Sigmoid colon (tissue), 7 donors: ENCODE measurements at regions of chr9 and their contacts with region 1.

Region 1: DNA sequence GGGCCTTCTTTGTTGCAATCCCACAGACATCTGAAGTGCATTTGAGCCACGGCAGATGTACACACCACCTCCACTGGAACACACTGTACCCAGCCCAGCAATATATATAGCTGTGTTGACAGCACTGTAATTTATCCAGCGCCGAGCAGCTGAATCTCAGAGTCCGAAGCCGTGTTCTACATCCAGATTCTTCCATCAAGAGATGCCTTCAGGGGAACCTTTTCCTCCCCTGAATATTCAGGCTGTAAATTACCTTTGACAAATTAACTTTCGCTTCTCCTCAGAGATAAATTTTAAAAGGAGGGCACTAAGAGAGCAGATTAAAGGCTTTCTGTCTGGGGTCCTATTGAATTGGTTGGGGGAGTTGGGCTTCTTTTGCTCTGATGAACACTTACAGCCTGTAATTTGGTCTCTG is 76.4 kb downstream of the ROR2 start:
- DNase-seq: peak; percentile 91
- H3K4me3 ChIP-seq: no peak overlapping the region
- H3K27ac ChIP-seq: peak overlapping the region; percentile 82 to 90 (median 86)
- H3K4me1 ChIP-seq: peaks cover 0 to 84% (median 72%) of the 10 kb centered on the region in 4 donors
- H3K27me3 ChIP-seq: no peaks in the 10 kb centered on the region
- CTCF ChIP-seq: no peak
- EP300 ChIP-seq: peak; percentile 98 to 99 (median 99)
- POLR2A ChIP-seq: no peak

Region 2: DNA sequence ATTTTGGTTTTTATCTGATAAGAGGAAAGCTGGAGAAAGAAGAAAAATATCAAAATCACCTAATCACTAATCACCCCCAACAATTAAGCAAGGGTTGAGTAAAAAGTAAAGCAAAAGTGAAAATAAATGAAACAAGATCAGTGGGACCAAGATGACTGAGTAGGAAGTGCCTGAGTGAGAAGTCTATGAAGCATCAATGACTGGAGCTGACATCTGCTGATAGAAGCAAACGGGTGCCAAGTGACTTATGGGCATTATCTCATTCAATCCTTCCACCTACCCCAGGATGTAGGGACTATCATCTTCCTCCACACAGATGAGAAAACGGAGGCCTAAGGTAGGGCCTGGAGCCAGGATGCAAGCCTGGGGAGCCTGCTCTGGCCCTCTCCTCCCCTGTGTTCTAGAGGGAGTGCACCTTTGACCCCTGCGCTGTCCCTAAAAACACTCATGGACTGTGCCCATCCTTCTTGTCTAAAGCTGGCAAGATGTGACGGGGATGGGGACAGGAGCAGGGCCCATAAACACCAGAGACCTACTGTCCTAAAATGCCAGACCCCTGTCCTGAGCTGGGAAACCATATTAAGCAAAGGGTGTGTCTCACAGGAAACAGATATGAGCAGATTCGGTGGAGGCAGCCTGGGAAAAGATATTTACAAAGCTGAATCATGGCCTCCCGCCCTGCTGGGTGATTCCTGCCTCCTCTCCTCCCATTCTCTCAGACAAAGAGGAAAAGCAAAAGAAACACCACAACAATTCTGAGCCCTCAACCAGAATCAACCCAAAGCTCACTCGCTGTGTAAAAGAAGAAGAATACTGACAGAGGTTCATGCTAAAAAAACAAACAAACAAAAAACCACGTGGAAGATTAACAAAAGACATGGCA is 628.0 kb before region 1 on chr9:
- intact Hi-C with region 1: no loop called
- DNase-seq: no peak
- H3K4me3 ChIP-seq: no peak overlapping the region
- H3K27ac ChIP-seq: no peak overlapping the region
- H3K4me1 ChIP-seq: peaks cover 0 to 9% (median 2%) of the 10 kb centered on the region in 4 donors
- H3K27me3 ChIP-seq: no peaks in the 10 kb centered on the region
- CTCF ChIP-seq: no peak
- EP300 ChIP-seq: no peak
- POLR2A ChIP-seq: no peak

Region 3: GRCh38 chr9:91782708-91783214 is 90.9 kb before region 1 on chr9:
- intact Hi-C with region 1: loop called (anchors 5 kb)
- DNase-seq: peak; percentile 55
- H3K4me3 ChIP-seq: no peak overlapping the region
- H3K27ac ChIP-seq: peak overlapping the region; percentile 69 to 73 (median 71)
- H3K4me1 ChIP-seq: peaks cover 0 to 58% (median 50%) of the 10 kb centered on the region in 4 donors
- H3K27me3 ChIP-seq: no peaks in the 10 kb centered on the region
- CTCF ChIP-seq: no peak
- EP300 ChIP-seq: no peak
- POLR2A ChIP-seq: no peak

Region 4: GRCh38 chr9:91837981-91838731 is 35.5 kb before region 1 on chr9:
- intact Hi-C with region 1: loop called (anchors 5 kb)
- DNase-seq: peak; percentile 85
- H3K4me3 ChIP-seq: peak overlapping the region; percentile 11 to 40 (median 23)
- H3K27ac ChIP-seq: peak overlapping the region; percentile 74 to 86 (median 80)
- H3K4me1 ChIP-seq: peaks cover 0 to 99% (median 96%) of the 10 kb centered on the region in 4 donors
- H3K27me3 ChIP-seq: no peaks in the 10 kb centered on the region
- CTCF ChIP-seq: no peak
- EP300 ChIP-seq: no peak
- POLR2A ChIP-seq: no peak

Region 5: DNA sequence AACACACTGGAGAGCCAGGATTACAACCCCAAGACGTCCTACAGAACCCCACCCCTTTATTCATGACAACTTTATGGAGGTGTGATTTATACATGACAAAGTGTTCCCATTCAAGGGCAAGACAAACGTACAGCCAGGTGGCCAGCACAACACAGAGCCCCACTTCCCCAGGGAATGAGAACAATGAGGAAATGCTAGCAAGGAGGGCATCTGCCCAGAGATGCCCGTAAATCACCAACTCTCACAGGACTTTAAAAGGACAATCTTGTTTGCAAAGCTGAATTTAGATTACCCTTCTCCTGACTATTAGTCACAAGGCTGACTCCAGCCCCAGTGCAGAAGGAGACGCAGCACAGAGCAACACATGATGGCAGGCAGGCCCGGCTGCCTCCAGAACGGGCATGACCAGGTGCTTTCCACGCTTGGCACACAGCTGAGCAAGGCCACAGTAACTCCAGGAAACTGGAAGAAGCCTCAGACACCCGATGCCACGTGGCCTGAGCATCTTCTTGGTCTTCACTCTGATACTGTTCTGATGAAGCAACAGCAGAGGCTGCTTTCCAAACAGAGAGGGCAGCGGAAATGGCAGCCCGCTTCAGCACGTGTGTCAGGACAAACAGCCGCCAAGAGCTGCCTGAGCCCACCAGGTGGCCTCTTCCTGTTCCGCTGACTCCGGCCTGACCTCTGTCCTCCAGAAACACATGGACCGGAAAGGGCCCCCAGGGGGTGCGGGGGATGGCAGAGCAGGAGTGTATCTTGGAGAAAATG is 25.0 kb after region 1 on chr9:
- intact Hi-C with region 1: loop called (anchors 2 kb)
- DNase-seq: peak; percentile 92
- H3K4me3 ChIP-seq: no peak overlapping the region
- H3K27ac ChIP-seq: peak overlapping the region; percentile 82 to 94 (median 86)
- H3K4me1 ChIP-seq: peaks cover 0 to 99% (median 95%) of the 10 kb centered on the region in 4 donors
- H3K27me3 ChIP-seq: no peaks in the 10 kb centered on the region
- CTCF ChIP-seq: no peak
- EP300 ChIP-seq: peak; percentile 73 to 92 (median 74)
- POLR2A ChIP-seq: no peak

Region 6: GRCh38 chr9:92019658-92020057 is 146.0 kb after region 1 on chr9:
- intact Hi-C with region 1: no loop called
- DNase-seq: no peak
- H3K4me3 ChIP-seq: no peak overlapping the region
- H3K27ac ChIP-seq: no peak overlapping the region
- H3K4me1 ChIP-seq: no peaks in the 10 kb centered on the region
- H3K27me3 ChIP-seq: no peaks in the 10 kb centered on the region
- CTCF ChIP-seq: no peak
- EP300 ChIP-seq: no peak
- POLR2A ChIP-seq: no peak

Region 7: GRCh38 chr9:93774331-93775102 is 1900.9 kb after region 1 on chr9:
- intact Hi-C with region 1: no loop called
- DNase-seq: no peak
- H3K4me3 ChIP-seq: no peak overlapping the region
- H3K27ac ChIP-seq: no peak overlapping the region
- H3K4me1 ChIP-seq: no peaks in the 10 kb centered on the region
- H3K27me3 ChIP-seq: no peaks in the 10 kb centered on the region
- CTCF ChIP-seq: no peak
- EP300 ChIP-seq: no peak
- POLR2A ChIP-seq: no peak